Posterior vena cava (tissue), 2 donors: ENCODE measurements at regions of chr3 and their contacts with region 1.

Region 1: GRCh38 chr3:194521514-194522260 is 34.9 kb upstream of the ATP13A3 start:
- DNase-seq: no peak

Region 2: DNA sequence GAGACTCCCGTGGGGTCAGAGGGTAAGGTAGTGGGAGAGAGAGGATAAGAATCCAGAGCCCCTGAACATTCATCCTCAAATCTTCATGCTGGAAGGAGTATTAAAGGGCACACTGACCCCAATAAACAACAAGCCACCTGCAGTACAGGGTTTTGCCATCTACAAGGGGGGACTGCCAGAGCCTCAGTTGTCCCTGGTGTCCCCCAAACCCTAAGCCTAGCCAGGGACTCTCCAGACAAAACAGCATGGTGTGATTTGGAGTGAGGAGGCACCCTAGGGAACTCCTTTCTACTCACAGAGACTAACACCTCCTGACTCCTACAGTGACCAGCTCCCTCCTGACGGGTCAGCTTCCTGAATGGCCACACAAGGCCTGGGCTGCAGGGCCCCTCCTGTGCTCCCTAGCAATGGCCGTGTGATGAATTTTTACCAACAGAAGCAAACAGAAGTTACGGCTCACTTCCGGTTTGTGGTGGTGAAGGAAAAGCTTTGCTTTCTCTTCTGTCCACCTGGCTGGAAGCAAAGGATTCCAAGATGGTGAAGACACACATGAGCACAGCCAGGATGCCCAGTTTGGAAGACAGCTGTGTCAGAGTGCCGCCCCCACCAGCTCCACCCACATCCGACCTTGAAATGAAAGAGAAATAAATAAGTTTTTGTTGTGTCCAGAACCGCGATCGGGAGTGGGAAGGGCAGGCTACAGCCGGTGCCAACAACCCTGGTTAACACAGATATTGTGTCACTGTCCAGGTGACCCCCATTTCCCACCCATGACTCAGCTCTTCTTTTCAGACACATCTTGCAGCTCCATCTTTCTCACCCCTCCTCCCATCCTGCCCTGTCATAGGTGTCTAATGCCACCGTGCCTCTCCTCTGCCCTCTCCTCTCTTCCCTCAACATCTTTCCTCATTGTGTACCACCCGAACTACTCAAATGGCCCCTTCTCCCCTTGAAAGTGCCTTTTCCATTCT is 34.7 kb after region 1 on chr3:
- intact Hi-C with region 1: loop called in 1 of 2 experiments (anchors 1 kb)
- DNase-seq: peak; percentile 69

Region 3: GRCh38 chr3:194573691-194574437 is 52.2 kb after region 1 on chr3:
- intact Hi-C with region 1: loop called in 1 of 2 experiments (anchors 10 kb)
- DNase-seq: no peak

Region 4: GRCh38 chr3:194592798-194593752 is 71.4 kb after region 1 on chr3:
- intact Hi-C with region 1: no loop called
- DNase-seq: no peak